Activated CD4-positive, alpha-beta T cell treated with anti-CD3 and anti-CD28 coated beads, Interleukin-2, amount 10 ng/mL, durations not matched to agents 24 days and 14 days (primary cell): ENCODE measurements at regions of chr19 and their contacts with region 1.

Region 1: GRCh38 chr19:43595999-43596841 is at the starts of genes IRGQ and ZNF576:
- DNase-seq: peak; percentile 100
- H3K4me3 Mint-ChIP-seq: peak within 1 kb of the TSS; percentile 96
- H3K27ac Mint-ChIP-seq: peak within 1 kb of the TSS; percentile 96
- H3K4me1 Mint-ChIP-seq: peaks cover 33% of the 10 kb centered on the region
- H3K27me3 Mint-ChIP-seq: no peaks in the 10 kb centered on the region
- total RNA-seq, gene IRGQ: 31.5 and 32.7 TPM in 2 replicates
- total RNA-seq, gene ZNF576: 14.4 and 15.3 TPM in 2 replicates

Region 2: DNA sequence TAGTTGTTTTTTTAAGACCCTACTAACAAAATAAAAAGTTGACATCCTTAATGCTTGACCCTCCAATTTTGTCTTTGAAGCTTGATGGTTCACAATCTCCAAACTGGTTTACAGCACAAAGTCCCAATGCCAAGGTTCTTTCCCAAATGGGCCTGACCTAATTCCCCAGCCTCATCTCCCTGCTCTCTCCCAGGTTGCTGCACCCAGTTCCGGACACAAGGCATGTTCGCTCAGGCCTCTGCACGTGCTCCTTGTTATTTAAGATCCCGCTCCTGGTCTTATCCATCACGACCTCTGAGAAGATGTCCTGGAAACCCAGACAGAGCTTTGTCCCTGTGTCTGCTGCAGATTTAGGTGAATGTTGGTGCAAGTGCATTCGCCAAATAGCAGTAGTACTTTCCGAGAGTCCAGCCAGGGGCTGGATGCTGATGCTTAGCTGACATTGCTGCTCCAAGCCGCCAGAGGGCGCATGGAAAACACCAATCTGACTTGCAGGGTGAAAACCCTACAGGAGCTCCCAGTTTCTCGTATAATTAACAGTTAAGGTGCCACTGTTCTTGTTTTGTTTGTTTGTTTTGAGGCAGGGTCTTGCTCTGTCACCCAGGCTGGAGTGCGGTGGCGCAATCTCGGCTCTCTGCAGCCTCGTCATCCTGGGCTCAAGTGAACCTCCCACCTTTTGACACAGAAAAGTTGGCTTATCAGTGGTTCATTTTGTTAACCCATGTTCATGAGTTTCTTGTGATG is 149.3 kb before region 1 on chr19:
- intact Hi-C with region 1: loop called (anchors 1 kb)
- DNase-seq: peak; percentile 93
- H3K4me3 Mint-ChIP-seq: no peak overlapping the region
- H3K27ac Mint-ChIP-seq: peak overlapping the region; percentile 44
- H3K4me1 Mint-ChIP-seq: peaks cover 25% of the 10 kb centered on the region
- H3K27me3 Mint-ChIP-seq: no peaks in the 10 kb centered on the region

Region 3: GRCh38 chr19:43532962-43533545 is 63.2 kb before region 1 on chr19 and contains the start of gene ZNF575:
- intact Hi-C with region 1: loop called (anchors 2 kb)
- DNase-seq: peak; percentile 95
- H3K4me3 Mint-ChIP-seq: peak within 1 kb of the TSS; percentile 83
- H3K27ac Mint-ChIP-seq: peak within 1 kb of the TSS; percentile 95
- H3K4me1 Mint-ChIP-seq: peaks cover 20% of the 10 kb centered on the region
- H3K27me3 Mint-ChIP-seq: no peaks in the 10 kb centered on the region
- total RNA-seq, gene ZNF575: 1.8 and 2.4 TPM in 2 replicates

Region 4: GRCh38 chr19:43575156-43575950 is 20.9 kb before region 1 on chr19 and contains the starts of genes PINLYP and XRCC1:
- intact Hi-C with region 1: loop called (anchors 1 kb)
- DNase-seq: peak; percentile 99
- H3K4me3 Mint-ChIP-seq: peak within 1 kb of the TSS; percentile 96
- H3K27ac Mint-ChIP-seq: peak within 1 kb of the TSS; percentile 94
- H3K4me1 Mint-ChIP-seq: peaks cover 28% of the 10 kb centered on the region
- H3K27me3 Mint-ChIP-seq: no peaks in the 10 kb centered on the region
- total RNA-seq, gene PINLYP: 7.9 and 9.9 TPM in 2 replicates
- total RNA-seq, gene XRCC1: 27.5 and 29.6 TPM in 2 replicates

Region 5: GRCh38 chr19:43668406-43669158 is 72.4 kb after region 1 on chr19:
- intact Hi-C with region 1: loop called (anchors 2 kb)
- DNase-seq: peak; percentile 98
- H3K4me3 Mint-ChIP-seq: peak overlapping the region; percentile 91
- H3K27ac Mint-ChIP-seq: peak overlapping the region; percentile 86
- H3K4me1 Mint-ChIP-seq: peaks cover 40% of the 10 kb centered on the region
- H3K27me3 Mint-ChIP-seq: peaks cover 7% of the 10 kb centered on the region

Region 6: DNA sequence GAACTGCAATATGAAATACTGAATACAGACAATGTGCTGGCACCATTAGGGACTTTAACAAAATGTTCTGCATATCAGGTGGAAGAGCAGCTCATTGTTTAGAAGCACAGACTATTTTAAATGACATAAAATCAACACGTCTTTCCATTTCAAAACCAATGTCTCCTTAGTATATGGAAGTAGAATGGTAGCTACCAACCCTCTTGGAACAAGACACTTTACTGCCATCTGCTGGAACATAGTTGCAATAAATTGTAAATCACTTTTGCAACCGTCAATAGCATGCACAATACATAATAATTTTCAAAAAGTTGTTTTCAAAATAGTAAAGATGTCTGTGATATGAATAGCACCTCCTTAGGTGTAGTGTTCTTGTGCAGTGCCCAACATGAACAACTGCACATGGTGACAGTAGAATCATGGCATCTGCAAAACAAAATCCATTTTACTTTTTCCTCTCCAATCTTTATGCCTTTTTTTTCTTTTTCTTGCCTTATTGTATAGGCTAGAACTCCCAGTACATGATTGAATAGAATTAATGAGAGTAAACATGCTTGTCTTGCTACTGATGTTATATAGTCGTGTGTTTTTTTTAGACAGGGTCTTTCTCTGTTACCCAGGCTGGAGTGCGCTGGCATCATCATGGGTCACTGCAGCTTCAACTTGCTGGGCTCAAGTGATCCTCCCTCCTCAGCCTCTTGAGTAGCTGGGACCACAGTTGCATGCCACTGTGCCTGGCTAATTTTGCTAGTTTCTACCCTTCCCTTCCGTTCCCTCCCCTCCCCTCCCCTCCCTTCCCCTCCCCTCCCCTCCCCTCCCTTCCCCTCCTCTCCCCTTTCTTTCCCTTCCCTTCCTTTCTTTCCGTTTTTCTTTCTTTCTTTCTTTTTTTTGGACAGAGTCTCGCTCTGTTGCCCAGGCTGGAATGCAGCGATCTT is 213.8 kb after region 1 on chr19:
- intact Hi-C with region 1: no loop called
- DNase-seq: peak; percentile 72
- H3K4me3 Mint-ChIP-seq: no peak overlapping the region
- H3K27ac Mint-ChIP-seq: no peak overlapping the region
- H3K4me1 Mint-ChIP-seq: no peaks in the 10 kb centered on the region
- H3K27me3 Mint-ChIP-seq: peaks cover 16% of the 10 kb centered on the region

Region 7: DNA sequence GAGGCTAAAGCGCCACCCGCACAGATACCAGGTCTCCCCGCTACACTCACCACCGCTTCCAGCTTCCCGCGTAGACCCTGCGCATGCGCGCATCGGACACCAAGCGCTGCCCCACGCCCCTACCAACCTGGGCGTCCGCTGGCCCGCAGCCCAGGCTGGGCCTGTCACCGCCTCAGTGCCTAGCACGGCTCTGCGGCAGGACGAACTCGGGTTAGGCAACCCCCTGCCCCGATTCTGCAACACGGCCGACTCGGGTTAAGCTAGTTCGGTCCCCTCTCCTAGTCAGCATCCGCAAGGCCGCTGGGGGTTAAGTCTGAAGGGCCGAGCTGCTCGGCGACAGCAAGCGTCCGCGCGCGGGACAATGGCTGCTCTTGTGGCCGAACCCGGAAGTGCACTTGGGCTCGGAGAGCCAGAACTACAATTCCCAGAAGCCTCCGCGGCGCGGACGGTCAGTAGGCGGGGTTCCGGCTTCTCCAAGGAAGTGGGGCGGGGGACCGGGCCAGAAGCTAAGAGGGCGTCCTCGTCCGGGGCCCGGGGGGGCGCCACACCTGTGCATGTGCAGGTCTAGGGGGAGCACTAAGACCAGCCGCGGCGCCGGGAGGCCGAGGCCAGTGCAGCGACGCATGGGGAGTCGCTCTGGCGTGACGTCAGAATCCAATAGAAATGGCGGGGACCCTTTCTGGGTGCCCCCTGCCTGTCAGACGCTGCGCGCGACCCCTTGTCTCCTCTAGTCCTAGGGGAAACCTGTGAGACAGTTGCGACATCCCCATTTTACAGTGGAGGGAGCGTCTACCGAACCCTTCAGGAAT is 904.1 kb after region 1 on chr19 and contains the start of gene ZNF180:
- intact Hi-C with region 1: loop called (anchors 10 kb)
- DNase-seq: peak; percentile 99
- H3K4me3 Mint-ChIP-seq: peak within 1 kb of the TSS; percentile 94
- H3K27ac Mint-ChIP-seq: peak within 1 kb of the TSS; percentile 93
- H3K4me1 Mint-ChIP-seq: peaks cover 27% of the 10 kb centered on the region
- H3K27me3 Mint-ChIP-seq: no peaks in the 10 kb centered on the region
- total RNA-seq, gene ZNF180: 7.0 and 8.5 TPM in 2 replicates